ENCODE measurements at regions of chr16 and their contacts with region 1.

Region 1: DNA sequence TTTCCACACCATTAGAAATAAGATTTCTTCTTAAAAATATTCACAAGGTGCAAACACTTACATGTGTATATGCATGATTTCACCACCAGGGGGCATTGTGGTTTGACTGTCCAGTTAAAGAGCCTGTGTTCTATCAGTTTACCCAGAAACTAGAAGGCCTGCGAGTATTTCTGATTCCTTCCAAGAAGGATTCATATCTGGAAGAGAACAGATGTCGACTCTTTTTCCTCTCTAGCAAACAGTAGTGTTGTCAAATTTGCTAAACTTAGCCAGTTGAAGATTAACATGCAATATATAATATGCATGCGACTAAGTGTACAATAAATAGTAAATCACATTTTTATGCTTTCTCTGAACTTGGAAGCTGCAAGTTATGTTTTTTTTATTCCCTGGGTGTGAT is 404.1 kb downstream of the WWOX start:
- DNase-seq: peak in 1 of 2 donors; percentile 79
- ATAC-seq: no peak
- H3K4me3 ChIP-seq: no peak overlapping the region
- H3K27ac ChIP-seq: no peak overlapping the region
- H3K4me1 ChIP-seq: peaks cover 0 to 54% (median 17%) of the 10 kb centered on the region in 9 donors
- H3K27me3 ChIP-seq: no peaks in the 10 kb centered on the region
- CTCF ChIP-seq: peak; percentile 79 to 93 (median 89)

Region 2: GRCh38 chr16:78122774-78123315 is 380.8 kb before region 1 on chr16:
- intact Hi-C with region 1: loop called in 1 of 10 experiments (anchors 5 kb)
- DNase-seq: no peak
- ATAC-seq: peak in 7 of 8 donors; percentile 67 to 84 (median 72)
- H3K4me3 ChIP-seq: no peak overlapping the region
- H3K27ac ChIP-seq: peak overlapping the region in 5 of 10 donors; percentile 1 to 46 (median 31)
- H3K4me1 ChIP-seq: peaks cover 0 to 26% (median 15%) of the 10 kb centered on the region in 9 donors
- H3K27me3 ChIP-seq: no peaks in the 10 kb centered on the region
- CTCF ChIP-seq: peak in 8 of 9 donors; percentile 46 to 74 (median 58)

Region 3: GRCh38 chr16:78461496-78462191 is 42.0 kb before region 1 on chr16:
- intact Hi-C with region 1: no loop called
- DNase-seq: no peak
- ATAC-seq: no peak
- H3K4me3 ChIP-seq: no peak overlapping the region
- H3K27ac ChIP-seq: no peak overlapping the region
- H3K4me1 ChIP-seq: no peaks in the 10 kb centered on the region
- H3K27me3 ChIP-seq: peaks cover 0 to 3% (median 0%) of the 10 kb centered on the region in 7 donors
- CTCF ChIP-seq: no peak

Region 4: GRCh38 chr16:78474762-78475161 is 28.8 kb before region 1 on chr16:
- intact Hi-C with region 1: no loop called
- DNase-seq: no peak
- ATAC-seq: no peak
- H3K4me3 ChIP-seq: no peak overlapping the region
- H3K27ac ChIP-seq: no peak overlapping the region
- H3K4me1 ChIP-seq: no peaks in the 10 kb centered on the region
- H3K27me3 ChIP-seq: no peaks in the 10 kb centered on the region
- CTCF ChIP-seq: no peak

Region 5: DNA sequence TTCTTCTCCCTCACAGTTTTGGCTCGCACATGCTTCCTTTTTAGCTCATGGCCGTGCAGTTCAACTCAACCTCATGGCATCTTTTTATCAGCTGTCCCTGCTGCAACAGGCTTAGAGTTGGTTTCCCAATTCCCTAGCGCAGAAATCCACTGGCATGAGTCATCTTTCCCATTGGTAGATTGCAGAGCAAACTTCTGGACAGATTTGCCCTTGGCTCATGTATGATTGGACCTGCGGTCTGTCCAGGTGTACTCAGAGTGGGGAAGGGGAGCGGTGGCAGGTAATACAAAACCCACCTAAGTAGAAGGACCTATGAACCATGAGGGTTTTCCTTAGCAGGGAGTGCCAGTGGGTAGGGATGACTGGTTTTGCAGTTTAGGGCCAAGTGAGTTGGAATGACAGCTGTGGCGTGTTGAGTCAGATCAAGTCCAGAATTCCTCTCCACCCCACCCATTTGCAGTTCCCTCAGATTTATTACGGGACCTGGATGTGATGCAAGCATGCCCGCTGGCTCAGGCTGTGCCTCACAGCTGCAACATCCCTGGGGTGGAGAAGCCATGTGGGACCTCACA is 180.5 kb after region 1 on chr16:
- intact Hi-C with region 1: loop called in 2 of 10 experiments (anchors 5 kb)
- DNase-seq: peak; percentile 54 to 60
- ATAC-seq: peak; percentile 59 to 89 (median 74)
- H3K4me3 ChIP-seq: no peak overlapping the region
- H3K27ac ChIP-seq: peak overlapping the region in 8 of 10 donors; percentile 24 to 77 (median 65)
- H3K4me1 ChIP-seq: peaks cover 0 to 32% (median 12%) of the 10 kb centered on the region in 9 donors
- H3K27me3 ChIP-seq: no peaks in the 10 kb centered on the region
- CTCF ChIP-seq: no peak

Region 6: GRCh38 chr16:78796221-78796866 is 292.7 kb after region 1 on chr16:
- intact Hi-C with region 1: no loop called
- DNase-seq: peak in 1 of 2 donors; percentile 69
- ATAC-seq: peak; percentile 73 to 95 (median 85)
- H3K4me3 ChIP-seq: peak overlapping the region in 1 of 10 donors; percentile 2
- H3K27ac ChIP-seq: peak overlapping the region in 3 of 10 donors; percentile 20 to 53 (median 32)
- H3K4me1 ChIP-seq: peaks cover 0 to 15% (median 0%) of the 10 kb centered on the region in 9 donors
- H3K27me3 ChIP-seq: no peaks in the 10 kb centered on the region
- CTCF ChIP-seq: no peak

Region 7: GRCh38 chr16:79261481-79261940 is 757.9 kb after region 1 on chr16:
- intact Hi-C with region 1: loop called in 2 of 10 experiments (anchors 10 kb)
- DNase-seq: peak; percentile 23 to 54
- ATAC-seq: peak in 6 of 8 donors; percentile 30 to 67 (median 56)
- H3K4me3 ChIP-seq: no peak overlapping the region
- H3K27ac ChIP-seq: peak overlapping the region in 1 of 10 donors; percentile 34
- H3K4me1 ChIP-seq: peaks cover 3 to 42% (median 13%) of the 10 kb centered on the region in 9 donors
- H3K27me3 ChIP-seq: peaks cover 0 to 8% (median 0%) of the 10 kb centered on the region in 7 donors
- CTCF ChIP-seq: peak in 8 of 9 donors; percentile 19 to 68 (median 53)

Region 8: GRCh38 chr16:80466024-80466987 is 1962.7 kb after region 1 on chr16:
- intact Hi-C with region 1: loop called in 1 of 10 experiments (anchors 10 kb)
- DNase-seq: peak; percentile 41 to 57
- ATAC-seq: peak in 7 of 8 donors; percentile 60 to 80 (median 70)
- H3K4me3 ChIP-seq: no peak overlapping the region
- H3K27ac ChIP-seq: no peak overlapping the region
- H3K4me1 ChIP-seq: peaks cover 0 to 5% (median 0%) of the 10 kb centered on the region in 9 donors
- H3K27me3 ChIP-seq: peaks cover 0 to 10% (median 0%) of the 10 kb centered on the region in 7 donors
- CTCF ChIP-seq: peak; percentile 45 to 85 (median 76)

Measured in heart right ventricle (tissue), 16 donors.